ENCODE measurements at regions of chr2 and their contacts with region 1.

Region 1: GRCh38 chr2:236512902-236513435 is 56.7 kb upstream of the ACKR3 start:
- DNase-seq: peak; percentile 50
- H3K4me3 Mint-ChIP-seq: no peak overlapping the region
- H3K27ac Mint-ChIP-seq: no peak overlapping the region
- H3K4me1 Mint-ChIP-seq: no peaks in the 10 kb centered on the region
- H3K27me3 Mint-ChIP-seq: no peaks in the 10 kb centered on the region
- CTCF ChIP-seq: peak; percentile 77

Region 2: DNA sequence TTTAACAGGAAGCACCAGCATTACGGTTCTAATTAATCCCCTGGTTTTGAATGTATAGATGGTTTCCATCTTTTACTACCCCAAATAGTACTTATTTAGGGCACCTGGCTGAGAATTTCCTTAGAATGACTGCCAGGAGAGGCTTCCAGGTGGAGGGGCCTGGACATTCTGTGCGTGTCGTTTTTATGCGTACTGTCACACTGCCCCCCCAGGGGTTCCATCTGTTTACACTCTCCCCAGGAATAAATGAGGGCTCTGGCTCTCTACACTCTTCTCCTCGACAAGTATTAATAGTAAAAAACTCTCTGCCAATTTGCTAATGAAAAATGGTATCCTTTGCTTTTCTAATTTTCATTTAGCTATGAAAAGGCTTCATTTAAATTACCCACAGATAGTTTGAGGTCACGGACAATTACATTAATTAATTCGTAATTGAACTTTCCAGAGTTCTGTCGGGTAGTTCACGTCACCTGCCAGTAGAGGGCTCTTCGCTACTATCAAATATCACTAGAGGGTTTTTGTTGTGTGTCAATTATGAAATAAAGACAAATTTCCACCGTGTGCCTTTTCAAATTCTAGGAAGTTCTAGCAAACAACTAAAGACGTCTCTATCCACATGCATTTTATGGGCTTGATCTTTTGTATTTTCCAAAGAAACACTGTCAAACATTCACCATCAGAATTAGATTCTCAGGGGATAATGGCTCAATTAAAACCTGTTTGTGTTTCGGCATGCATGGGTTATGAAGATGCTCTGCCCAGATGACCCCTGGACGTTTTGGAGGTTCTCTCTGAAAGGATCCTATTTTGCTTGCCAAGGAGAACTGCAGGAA is 160.0 kb before region 1 on chr2:
- CTCF ChIA-PET with region 1: interaction called, 8 read pairs
- POLR2A ChIA-PET with region 1: no interaction called
- intact Hi-C with region 1: loop called (anchors 1 kb)
- DNase-seq: peak; percentile 43
- H3K4me3 Mint-ChIP-seq: no peak overlapping the region
- H3K27ac Mint-ChIP-seq: no peak overlapping the region
- H3K4me1 Mint-ChIP-seq: no peaks in the 10 kb centered on the region
- H3K27me3 Mint-ChIP-seq: peaks cover 46% of the 10 kb centered on the region
- CTCF ChIP-seq: peak; percentile 78

Region 3: DNA sequence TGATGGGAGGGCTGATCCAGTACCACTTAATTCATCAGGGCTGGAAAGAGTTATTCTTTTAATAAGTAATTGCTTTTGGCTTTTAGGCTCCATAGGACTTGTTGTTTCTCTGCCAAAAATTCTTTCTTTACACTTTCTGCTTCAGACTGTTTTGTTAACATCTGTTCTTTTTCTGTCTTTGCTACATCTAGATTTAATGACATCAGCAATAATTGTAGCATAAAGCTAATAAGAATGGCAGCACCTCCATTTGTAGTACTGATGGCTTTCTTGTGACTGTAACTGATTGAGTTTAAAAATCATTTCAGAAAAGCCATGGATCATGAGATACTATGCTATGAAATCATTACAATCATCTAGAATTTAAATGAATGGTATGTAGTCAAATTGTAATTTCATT is 10.3 kb after region 1 on chr2:
- CTCF ChIA-PET with region 1: interaction called, 10 read pairs
- POLR2A ChIA-PET with region 1: no interaction called
- intact Hi-C with region 1: no loop called
- DNase-seq: no peak
- H3K4me3 Mint-ChIP-seq: no peak overlapping the region
- H3K27ac Mint-ChIP-seq: no peak overlapping the region
- H3K4me1 Mint-ChIP-seq: peaks cover 5% of the 10 kb centered on the region
- H3K27me3 Mint-ChIP-seq: peaks cover 43% of the 10 kb centered on the region
- CTCF ChIP-seq: no peak

Region 4: DNA sequence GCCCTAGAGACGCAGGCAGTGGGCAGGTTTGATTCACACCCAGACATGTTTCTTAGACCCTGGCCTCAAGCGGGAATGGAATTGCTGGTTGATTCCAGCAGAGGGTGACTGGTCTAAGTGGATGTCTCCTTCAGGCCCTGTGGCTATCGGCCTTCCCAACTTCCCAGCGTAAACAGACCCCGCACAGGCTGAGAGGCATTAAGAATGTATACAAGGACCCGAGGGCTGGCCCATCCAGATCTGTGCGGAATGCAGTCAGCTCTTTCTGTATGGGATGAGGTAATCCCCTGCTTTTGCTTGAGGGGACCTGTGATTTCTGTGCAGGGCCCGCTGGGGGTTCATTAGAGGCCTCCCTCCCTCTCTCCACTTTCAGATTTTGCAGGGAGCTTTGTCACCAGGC is 63.1 kb after region 1 on chr2:
- CTCF ChIA-PET with region 1: no interaction called
- POLR2A ChIA-PET with region 1: no interaction called
- intact Hi-C with region 1: no loop called
- DNase-seq: no peak
- H3K4me3 Mint-ChIP-seq: no peak overlapping the region
- H3K27ac Mint-ChIP-seq: no peak overlapping the region
- H3K4me1 Mint-ChIP-seq: no peaks in the 10 kb centered on the region
- H3K27me3 Mint-ChIP-seq: no peaks in the 10 kb centered on the region
- CTCF ChIP-seq: no peak

Region 5: DNA sequence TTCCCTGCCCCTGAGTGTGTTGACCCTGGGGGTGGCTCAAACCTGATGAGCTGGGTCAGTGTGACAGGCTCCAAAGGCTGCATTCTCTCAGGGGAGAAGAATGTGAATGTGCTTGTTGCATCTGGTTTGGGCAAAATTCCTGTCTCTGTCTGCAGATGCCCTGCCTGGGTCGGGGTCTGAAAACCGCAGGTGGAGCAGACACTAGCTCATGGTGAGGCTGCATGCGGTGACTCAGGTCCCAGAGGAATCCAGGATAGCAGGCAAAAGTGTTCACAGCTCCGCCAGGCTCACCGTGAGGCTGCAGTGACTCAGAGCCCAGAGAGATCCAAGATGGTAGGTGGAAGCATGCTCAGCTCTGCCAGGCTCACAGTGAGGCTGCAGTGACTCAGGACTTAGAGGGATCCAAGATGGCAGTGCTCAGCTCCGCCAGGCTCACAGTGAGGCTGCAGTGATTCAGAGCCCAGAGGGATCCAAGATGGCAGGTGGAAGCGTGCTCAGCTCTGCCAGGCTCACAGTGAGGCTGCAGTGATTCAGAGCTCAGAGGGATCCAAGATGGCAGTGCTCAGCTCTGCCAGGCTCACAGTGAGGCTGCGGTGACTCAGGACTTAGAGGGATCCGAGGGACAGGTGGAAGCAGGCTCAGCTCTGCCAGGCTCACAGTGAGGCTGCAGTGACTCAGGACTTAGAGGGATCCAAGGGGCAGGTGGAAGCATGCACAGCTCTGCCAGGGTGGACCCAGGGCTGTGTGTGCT is 257.1 kb after region 1 on chr2:
- CTCF ChIA-PET with region 1: interaction called, 4 read pairs
- POLR2A ChIA-PET with region 1: no interaction called
- intact Hi-C with region 1: loop called (anchors 1 kb)
- DNase-seq: peak; percentile 93
- H3K4me3 Mint-ChIP-seq: peak overlapping the region; percentile 40
- H3K27ac Mint-ChIP-seq: peak overlapping the region; percentile 92
- H3K4me1 Mint-ChIP-seq: peaks cover 22% of the 10 kb centered on the region
- H3K27me3 Mint-ChIP-seq: no peaks in the 10 kb centered on the region
- CTCF ChIP-seq: no peak

Region 6: DNA sequence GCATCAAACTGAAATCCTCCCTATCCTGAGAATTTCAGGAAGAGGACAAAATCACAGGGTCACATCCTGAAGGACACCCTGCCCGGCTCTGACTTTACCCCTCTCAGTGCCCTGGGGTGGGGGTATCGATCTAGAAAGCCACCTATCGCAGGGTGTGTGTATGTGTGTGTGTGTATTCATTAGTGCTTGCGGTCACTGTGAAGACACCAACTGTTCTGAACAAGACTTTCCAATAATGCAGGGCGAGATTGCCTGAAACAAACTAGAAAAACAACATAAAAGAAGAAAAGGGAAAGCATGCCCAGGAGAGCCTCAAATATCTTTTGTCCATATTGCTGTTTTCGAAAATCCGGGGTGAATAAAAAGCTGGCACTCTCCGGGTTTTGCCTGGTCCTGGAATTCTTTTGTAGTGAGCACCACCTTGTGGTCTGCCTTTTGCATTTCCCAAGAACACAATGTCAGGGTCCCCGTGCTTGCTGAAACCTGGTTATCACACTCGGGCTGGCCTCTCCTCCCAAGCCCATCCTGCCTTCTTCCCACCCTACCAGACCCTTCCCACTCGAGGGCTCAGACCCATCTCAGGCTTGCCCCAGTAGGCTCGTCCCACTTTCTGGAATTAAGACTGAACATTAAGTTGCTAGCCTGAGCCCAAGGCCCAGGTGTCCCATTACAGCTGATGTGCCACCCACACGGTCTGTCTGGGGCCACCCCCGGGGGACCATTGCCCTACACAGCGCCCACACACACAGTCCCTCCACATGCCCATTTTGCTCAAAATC is 547.8 kb after region 1 on chr2:
- CTCF ChIA-PET with region 1: interaction called, 9 read pairs
- POLR2A ChIA-PET with region 1: interaction called, 4 read pairs
- intact Hi-C with region 1: loop called (anchors 1 kb)
- DNase-seq: peak; percentile 71
- H3K4me3 Mint-ChIP-seq: no peak overlapping the region
- H3K27ac Mint-ChIP-seq: no peak overlapping the region
- H3K4me1 Mint-ChIP-seq: peaks cover 11% of the 10 kb centered on the region
- H3K27me3 Mint-ChIP-seq: no peaks in the 10 kb centered on the region
- CTCF ChIP-seq: peak; percentile 75

Measured in MCF 10A (cell line).